Mammary epithelial cell (primary cell): ENCODE measurements at regions of chr6 and their contacts with region 1.

Region 1: GRCh38 chr6:144896289-144896688 is 611.2 kb downstream of the UTRN start:
- DNase-seq: no peak
- H3K4me3 ChIP-seq: no peak overlapping the region
- H3K27ac ChIP-seq: no peak overlapping the region
- H3K4me1 ChIP-seq: peaks cover 24% of the 10 kb centered on the region
- H3K27me3 ChIP-seq: no peaks in the 10 kb centered on the region
- CTCF ChIP-seq: no peak

Region 2: GRCh38 chr6:145147981-145148783 is 251.9 kb after region 1 on chr6:
- CTCF ChIA-PET with region 1: interaction called, 24 read pairs
- dilution Hi-C with region 1: no loop called
- in situ Hi-C with region 1: no loop called
- intact Hi-C with region 1: no loop called
- DNase-seq: peak; percentile 92
- H3K4me3 ChIP-seq: no peak overlapping the region
- H3K27ac ChIP-seq: peak overlapping the region; percentile 6
- H3K4me1 ChIP-seq: peaks cover 18% of the 10 kb centered on the region
- H3K27me3 ChIP-seq: no peaks in the 10 kb centered on the region
- CTCF ChIP-seq: no peak